ENCODE measurements at regions of chr15 and their contacts with region 1.

Region 1: DNA sequence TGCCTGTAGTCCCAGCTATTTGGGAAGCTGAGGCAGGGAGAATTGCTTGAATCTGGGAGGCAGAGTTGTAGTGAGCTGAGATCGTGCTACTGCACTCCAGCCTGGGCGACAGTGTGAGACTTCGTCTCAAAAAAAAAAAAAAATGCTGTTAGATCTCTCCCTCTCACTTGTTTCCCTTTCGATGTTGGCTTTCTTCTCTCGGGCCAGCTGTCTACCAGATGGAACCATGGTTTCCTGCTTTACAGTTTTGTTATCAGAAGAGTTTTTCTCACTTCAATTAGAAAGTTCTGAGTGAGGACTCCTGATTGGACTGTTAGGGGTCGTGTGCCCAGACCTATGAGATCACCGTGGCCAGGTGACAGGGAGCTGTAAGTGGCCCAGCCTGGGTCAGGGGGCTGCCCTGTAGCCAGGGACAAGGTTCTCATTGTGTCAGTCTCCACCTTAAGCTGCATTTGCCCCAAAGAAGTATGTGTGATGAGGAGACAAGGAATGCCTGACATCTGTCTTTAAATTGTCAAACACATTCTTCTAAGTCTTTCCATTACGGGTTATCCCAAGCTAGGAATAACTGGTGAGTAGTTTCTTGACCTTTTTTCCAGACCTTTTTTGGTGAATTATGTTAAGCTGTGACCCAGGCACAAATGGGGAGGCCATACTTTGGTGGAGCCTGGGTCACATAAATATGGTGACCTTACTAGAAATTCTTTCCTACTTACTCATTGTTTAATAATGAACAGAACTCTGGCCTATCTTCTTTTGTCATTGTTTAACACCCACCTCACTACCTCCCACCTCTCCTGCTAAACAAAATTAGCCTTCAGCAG is 25.2 kb downstream of the SNAPC5 start:
- DNase-seq: peak; percentile 74
- ATAC-seq: peak; percentile 98
- H3K4me3 Mint-ChIP-seq: peak overlapping the region; percentile 26
- H3K27ac Mint-ChIP-seq: peak overlapping the region; percentile 77
- H3K4me1 Mint-ChIP-seq: peaks cover 40% of the 10 kb centered on the region
- H3K27me3 Mint-ChIP-seq: no peaks in the 10 kb centered on the region

Region 2: GRCh38 chr15:66433726-66434125 is 38.7 kb before region 1 on chr15:
- CTCF ChIA-PET with region 1: no interaction called
- POLR2A ChIA-PET with region 1: no interaction called
- DNase-seq: no peak
- ATAC-seq: no peak
- H3K4me3 Mint-ChIP-seq: no peak overlapping the region
- H3K27ac Mint-ChIP-seq: peak overlapping the region; percentile 41
- H3K4me1 Mint-ChIP-seq: peaks cover 45% of the 10 kb centered on the region
- H3K27me3 Mint-ChIP-seq: no peaks in the 10 kb centered on the region

Region 3: DNA sequence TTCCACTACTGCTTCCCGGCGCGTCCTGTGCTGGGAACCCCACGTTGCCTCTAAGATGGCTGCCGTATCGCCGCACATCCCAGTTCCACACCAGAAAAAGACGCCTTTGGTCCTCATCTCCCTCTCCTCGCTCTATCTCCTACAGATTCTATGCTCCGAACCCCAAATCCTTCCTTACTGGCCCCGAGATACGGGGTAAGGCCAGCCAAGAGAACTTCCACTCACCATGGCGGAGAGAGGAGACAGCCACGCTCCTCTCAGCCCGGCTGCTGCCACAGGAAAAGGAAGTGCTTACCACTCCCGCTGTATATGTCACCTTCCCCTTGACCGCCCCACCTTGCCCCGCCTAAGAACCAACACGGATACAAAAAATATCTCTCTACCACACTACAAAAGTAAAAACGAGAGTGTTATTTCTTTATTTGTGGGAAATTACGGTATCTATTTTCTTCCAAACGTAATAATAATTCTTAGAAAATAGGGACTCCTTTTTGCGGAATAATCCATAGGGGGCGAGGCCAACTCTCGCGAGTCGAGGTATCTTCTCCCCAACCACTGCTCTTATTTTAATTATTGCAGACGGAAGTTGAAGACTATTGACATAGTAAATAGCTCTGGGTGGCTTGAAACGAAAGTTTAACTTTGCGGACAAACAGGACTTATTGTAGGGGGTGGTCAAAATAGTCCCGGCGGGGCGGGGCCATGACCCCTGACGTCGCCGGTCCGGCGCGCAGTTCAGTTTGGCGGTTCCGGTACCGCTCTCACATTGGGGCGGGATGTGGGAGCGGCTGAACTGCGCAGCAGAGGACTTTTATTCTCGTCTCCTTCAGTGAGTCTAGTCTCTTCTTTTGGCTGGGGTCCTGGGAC is 32.4 kb after region 1 on chr15 and contains the starts of genes RPL4 and ZWILCH:
- CTCF ChIA-PET with region 1: interaction called, 50 read pairs
- POLR2A ChIA-PET with region 1: interaction called, 11 read pairs
- DNase-seq: peak; percentile 88
- ATAC-seq: peak; percentile 89
- H3K4me3 Mint-ChIP-seq: peak within 1 kb of the TSS; percentile 98
- H3K27ac Mint-ChIP-seq: peak within 1 kb of the TSS; percentile 99
- H3K4me1 Mint-ChIP-seq: peaks cover 61% of the 10 kb centered on the region
- H3K27me3 Mint-ChIP-seq: no peaks in the 10 kb centered on the region
- total RNA-seq, gene RPL4: 2,498 to 2,528 TPM
- total RNA-seq, gene ZWILCH: 37.2 to 44.8 TPM

Measured in activated CD8-positive, alpha-beta T cell treated with anti-CD3 and anti-CD28 coated beads, Interleukin-2, amount 10 ng/mL, durations not matched to agents 7 days and 5 days (primary cell).